CD4-positive, alpha-beta T cell (primary cell): ENCODE measurements at regions of chr2 and their contacts with region 1.

Region 1: DNA sequence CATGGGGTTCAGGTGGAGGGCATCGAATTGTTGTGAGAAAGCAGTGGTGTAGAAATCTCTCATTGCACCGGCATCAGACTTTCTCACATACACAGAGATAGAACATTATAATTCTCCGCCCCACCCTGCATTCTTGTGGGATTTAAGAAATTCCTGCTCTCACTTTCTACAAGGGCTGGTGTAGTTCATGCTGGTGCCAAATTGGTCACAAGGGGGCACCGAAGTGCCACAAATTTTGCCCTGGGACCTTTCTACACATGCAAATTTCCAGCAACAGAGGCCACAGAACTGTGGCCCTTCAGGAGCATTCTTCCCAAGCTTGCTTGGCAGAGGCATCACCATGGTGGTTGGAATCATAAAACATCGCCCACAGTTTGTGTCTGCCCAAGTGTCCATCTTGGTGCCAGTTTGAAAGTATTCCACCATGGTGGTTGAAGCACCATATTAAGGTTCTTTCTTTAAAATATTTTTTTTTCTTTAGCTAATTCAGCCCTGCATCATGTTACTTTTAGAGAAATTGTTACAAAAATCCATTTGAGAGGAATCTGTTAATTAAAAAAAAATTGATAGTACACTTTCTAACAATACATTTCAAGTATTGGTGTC is 521.2 kb upstream of the FANCL start:
- DNase-seq: peak in 3 of 14 experiments; percentile 5 to 39 (median 22)
- ATAC-seq: no peak
- H3K4me3 ChIP-seq: no peak overlapping the region
- H3K4me3 Mint-ChIP-seq: no peak overlapping the region
- H3K27ac ChIP-seq: no peak overlapping the region
- H3K27ac Mint-ChIP-seq: no peak overlapping the region
- H3K4me1 ChIP-seq: no peaks in the 10 kb centered on the region
- H3K4me1 Mint-ChIP-seq: no peaks in the 10 kb centered on the region
- H3K27me3 ChIP-seq: no peaks in the 10 kb centered on the region
- H3K27me3 Mint-ChIP-seq: peaks cover 4% of the 10 kb centered on the region
- CTCF ChIP-seq: no peak

Region 2: GRCh38 chr2:58871469-58872142 is 109.3 kb after region 1 on chr2:
- CTCF ChIA-PET with region 1: no interaction called
- POLR2A ChIA-PET with region 1: no interaction called
- intact Hi-C with region 1: no loop called
- DNase-seq: no peak
- ATAC-seq: no peak
- H3K4me3 ChIP-seq: no peak overlapping the region
- H3K4me3 Mint-ChIP-seq: no peak overlapping the region
- H3K27ac ChIP-seq: no peak overlapping the region
- H3K27ac Mint-ChIP-seq: no peak overlapping the region
- H3K4me1 ChIP-seq: no peaks in the 10 kb centered on the region
- H3K4me1 Mint-ChIP-seq: no peaks in the 10 kb centered on the region
- H3K27me3 ChIP-seq: no peaks in the 10 kb centered on the region
- H3K27me3 Mint-ChIP-seq: peaks cover 9% of the 10 kb centered on the region
- CTCF ChIP-seq: no peak

Region 3: GRCh38 chr2:60581433-60582282 is 1819.4 kb after region 1 on chr2:
- CTCF ChIA-PET with region 1: no interaction called
- POLR2A ChIA-PET with region 1: no interaction called
- intact Hi-C with region 1: loop called in 1 of 2 experiments (anchors 2 kb)
- DNase-seq: peak; percentile 19 to 80 (median 46)
- ATAC-seq: peak; percentile 92
- H3K4me3 ChIP-seq: no peak overlapping the region
- H3K4me3 Mint-ChIP-seq: no peak overlapping the region
- H3K27ac ChIP-seq: no peak overlapping the region
- H3K27ac Mint-ChIP-seq: no peak overlapping the region
- H3K4me1 ChIP-seq: peaks cover 9% of the 10 kb centered on the region
- H3K4me1 Mint-ChIP-seq: no peaks in the 10 kb centered on the region
- H3K27me3 ChIP-seq: peaks cover 22 to 27% of the 10 kb centered on the region in 2 experiments
- H3K27me3 Mint-ChIP-seq: peaks cover 50% of the 10 kb centered on the region
- CTCF ChIP-seq: peak; percentile 83

Region 4: DNA sequence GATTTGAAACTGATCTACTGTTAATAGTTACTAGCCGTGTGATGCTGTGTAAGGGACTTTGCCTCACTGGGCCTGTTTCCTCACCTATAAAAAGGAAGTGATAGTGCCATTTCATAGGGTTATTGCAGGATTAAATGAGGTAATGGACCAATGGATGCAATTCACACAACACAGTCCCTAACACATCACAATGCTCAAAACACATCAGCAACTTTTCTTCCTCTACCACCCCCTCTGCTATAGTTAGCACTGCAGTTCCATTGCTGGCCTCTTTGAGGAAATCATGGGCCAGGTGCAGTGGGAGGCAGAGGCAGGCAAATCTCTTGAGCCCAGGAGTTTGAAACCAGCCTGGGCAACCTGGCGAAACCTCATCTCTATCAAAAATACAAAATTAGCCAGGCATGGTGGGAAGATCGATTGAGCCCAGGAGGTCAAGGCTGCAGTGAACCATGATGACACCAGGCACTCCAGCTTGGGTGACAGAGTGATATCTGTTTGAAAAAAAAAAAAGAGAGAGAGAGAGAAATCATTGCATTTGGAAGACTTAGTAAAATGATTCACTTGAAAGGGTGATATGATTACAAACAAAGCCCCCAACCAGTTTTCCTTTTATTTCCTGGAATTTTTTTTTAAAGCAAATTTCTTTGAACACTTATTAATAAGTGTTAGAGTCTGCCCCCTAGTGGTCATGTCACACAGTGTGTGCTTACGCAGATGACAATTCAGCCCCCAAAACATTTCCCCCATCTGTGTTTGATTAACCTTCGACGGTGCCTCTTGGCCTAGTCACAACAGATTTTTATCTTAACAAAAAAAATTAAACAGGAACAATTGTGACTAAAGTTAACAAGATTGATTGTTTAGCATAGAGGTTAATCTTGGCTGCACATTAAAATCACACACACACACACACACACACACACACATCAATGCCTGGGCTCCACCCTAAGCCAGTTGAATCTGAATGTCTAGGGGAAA is 1879.8 kb after region 1 on chr2:
- CTCF ChIA-PET with region 1: no interaction called
- POLR2A ChIA-PET with region 1: no interaction called
- intact Hi-C with region 1: loop called in 1 of 2 experiments (anchors 10 kb)
- DNase-seq: peak in 6 of 14 experiments; percentile 2 to 62 (median 38)
- ATAC-seq: no peak
- H3K4me3 ChIP-seq: no peak overlapping the region
- H3K4me3 Mint-ChIP-seq: no peak overlapping the region
- H3K27ac ChIP-seq: no peak overlapping the region
- H3K27ac Mint-ChIP-seq: no peak overlapping the region
- H3K4me1 ChIP-seq: no peaks in the 10 kb centered on the region
- H3K4me1 Mint-ChIP-seq: no peaks in the 10 kb centered on the region
- H3K27me3 ChIP-seq: no peaks in the 10 kb centered on the region
- H3K27me3 Mint-ChIP-seq: no peaks in the 10 kb centered on the region
- CTCF ChIP-seq: peak; percentile 84